PC-9 (cell line): ENCODE measurements at regions of chr16 and their contacts with region 1.

Region 1: DNA sequence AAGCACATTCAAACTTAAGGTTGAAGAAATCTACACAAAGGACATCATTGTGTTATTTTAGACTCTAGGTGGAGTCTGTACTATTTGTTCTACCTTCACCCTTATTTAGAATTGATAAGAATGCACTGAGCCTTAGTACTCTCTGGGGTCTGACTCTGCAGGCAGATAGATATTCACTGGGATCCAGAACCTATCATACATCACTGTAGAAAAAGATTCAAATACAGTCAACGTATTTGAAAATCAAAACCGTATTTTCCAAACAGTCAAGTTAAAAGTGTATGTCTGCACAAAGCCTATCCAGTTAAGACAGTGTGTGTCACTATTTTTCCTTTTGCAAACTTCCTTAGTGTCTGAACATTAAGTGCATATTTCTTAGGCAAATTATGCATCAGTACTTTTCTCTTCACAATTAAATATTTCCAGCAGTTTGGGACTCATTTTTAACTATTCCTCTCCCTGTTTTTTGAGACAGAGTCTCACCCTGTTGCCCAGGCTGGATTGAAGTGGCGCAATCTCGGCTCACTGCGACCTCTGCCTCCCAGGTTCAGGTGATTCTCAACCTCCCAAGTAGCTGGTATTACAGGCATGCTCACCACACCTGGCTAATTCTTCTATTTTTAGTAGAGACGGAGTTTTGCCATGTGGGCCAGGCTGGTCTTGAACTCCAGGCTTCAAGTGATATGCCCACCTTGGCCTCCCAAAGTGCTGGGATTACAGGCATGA is 22.3 kb downstream of the MOSMO start:
- DNase-seq: no peak
- H3K4me3 ChIP-seq: no peak overlapping the region
- H3K27ac ChIP-seq: 0 out of 2 replicates have a peak overlapping the region, but pooled peaks have one; percentile 16
- H3K4me1 ChIP-seq: peaks cover 58% of the 10 kb centered on the region
- H3K27me3 ChIP-seq: no peaks in the 10 kb centered on the region
- CTCF ChIP-seq: no peak

Region 2: GRCh38 chr16:21116148-21116693 is 914.0 kb before region 1 on chr16:
- CTCF ChIA-PET with region 1: no interaction called
- POLR2A ChIA-PET with region 1: no interaction called
- intact Hi-C with region 1: no loop called
- DNase-seq: no peak
- H3K4me3 ChIP-seq: no peak overlapping the region
- H3K27ac ChIP-seq: no peak overlapping the region
- H3K4me1 ChIP-seq: no peaks in the 10 kb centered on the region
- H3K27me3 ChIP-seq: no peaks in the 10 kb centered on the region
- CTCF ChIP-seq: no peak

Region 3: DNA sequence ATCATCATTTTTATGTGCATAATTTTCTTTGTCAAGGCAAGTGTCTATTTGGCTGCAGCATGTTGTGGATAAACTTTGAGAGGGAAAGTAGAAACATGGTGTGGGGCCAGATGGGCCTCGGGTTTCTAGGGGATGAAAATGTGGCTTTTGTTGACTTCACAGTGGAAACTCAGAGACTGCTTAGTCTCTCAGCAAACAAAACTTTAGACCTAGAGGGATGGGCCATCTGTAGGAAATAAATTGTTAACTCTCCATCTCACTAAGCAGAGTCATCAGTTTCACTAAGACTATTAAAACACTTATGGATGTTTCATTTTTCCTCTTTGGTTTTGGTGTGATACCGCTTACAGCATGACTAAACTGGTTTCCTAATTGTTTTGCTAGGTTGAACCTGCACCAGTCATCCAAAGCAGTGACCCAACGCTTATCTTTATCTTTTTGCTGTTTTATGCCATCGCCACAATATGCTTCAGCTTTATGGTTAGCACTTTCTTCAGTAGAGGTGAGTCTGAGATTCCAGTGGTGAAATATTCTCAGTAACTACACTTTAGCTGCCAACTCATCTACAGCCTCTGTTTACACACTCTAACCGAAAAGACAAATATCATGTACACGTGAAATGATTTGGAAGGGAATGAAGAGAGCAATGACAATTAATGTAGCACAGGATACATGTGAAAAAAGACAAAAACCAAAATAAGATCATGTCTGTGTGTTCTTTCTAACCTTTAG is 691.5 kb before region 1 on chr16:
- CTCF ChIA-PET with region 1: no interaction called
- POLR2A ChIA-PET with region 1: no interaction called
- intact Hi-C with region 1: no loop called
- DNase-seq: no peak
- H3K4me3 ChIP-seq: no peak overlapping the region
- H3K27ac ChIP-seq: no peak overlapping the region
- H3K4me1 ChIP-seq: no peaks in the 10 kb centered on the region
- H3K27me3 ChIP-seq: no peaks in the 10 kb centered on the region
- CTCF ChIP-seq: no peak

Region 4: DNA sequence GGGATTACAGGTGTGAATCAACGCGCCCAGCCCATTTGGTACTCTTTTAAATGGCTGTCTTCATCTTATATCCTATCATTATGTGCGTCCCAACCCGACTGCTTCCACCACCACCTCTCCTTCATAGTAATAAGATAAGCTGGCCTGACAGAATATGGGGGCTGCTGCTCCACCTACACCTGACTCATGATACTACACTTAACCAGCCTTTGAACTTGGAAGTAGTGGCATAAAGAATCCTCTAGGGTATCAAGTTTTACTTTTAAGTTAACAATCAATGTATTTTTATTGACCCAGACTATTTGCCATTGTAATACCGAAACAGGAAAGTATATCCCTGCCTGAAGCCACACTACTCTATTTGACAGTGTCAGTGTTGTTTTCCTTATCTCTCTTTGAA is 48.1 kb before region 1 on chr16:
- CTCF ChIA-PET with region 1: no interaction called
- POLR2A ChIA-PET with region 1: no interaction called
- intact Hi-C with region 1: no loop called
- DNase-seq: no peak
- H3K4me3 ChIP-seq: no peak overlapping the region
- H3K27ac ChIP-seq: no peak overlapping the region
- H3K4me1 ChIP-seq: no peaks in the 10 kb centered on the region
- H3K27me3 ChIP-seq: no peaks in the 10 kb centered on the region
- CTCF ChIP-seq: no peak

Region 5: GRCh38 chr16:22050963-22051362 is 20.7 kb after region 1 on chr16:
- CTCF ChIA-PET with region 1: no interaction called
- POLR2A ChIA-PET with region 1: interaction called, 23 read pairs
- intact Hi-C with region 1: no loop called
- DNase-seq: peak; percentile 35 to 64
- H3K4me3 ChIP-seq: no peak overlapping the region
- H3K27ac ChIP-seq: peak overlapping the region; percentile 30; the same call in 1 of the 2 replicates
- H3K4me1 ChIP-seq: peaks cover 22% of the 10 kb centered on the region
- H3K27me3 ChIP-seq: no peaks in the 10 kb centered on the region
- CTCF ChIP-seq: no peak

Region 6: GRCh38 chr16:22297114-22297878 is 267.0 kb after region 1 on chr16 and contains the start of gene POLR3E:
- CTCF ChIA-PET with region 1: no interaction called
- POLR2A ChIA-PET with region 1: no interaction called
- intact Hi-C with region 1: no loop called
- DNase-seq: peak; percentile 89 to 100
- H3K4me3 ChIP-seq: peak within 1 kb of the TSS; percentile 78
- H3K27ac ChIP-seq: peak within 1 kb of the TSS; percentile 84
- H3K4me1 ChIP-seq: no peaks in the 10 kb centered on the region
- H3K27me3 ChIP-seq: no peaks in the 10 kb centered on the region
- CTCF ChIP-seq: peak; percentile 86
- total RNA-seq, gene POLR3E: 65.2 and 70.9 TPM in 2 replicates